Activated naive CD4-positive, alpha-beta T cell treated with anti-CD3 and anti-CD28 coated beads, Interleukin-2, amount 10 ng/mL, durations not matched to agents 7 days and 5 days (primary cell): ENCODE measurements at regions of chr5 and their contacts with region 1.

Region 1: GRCh38 chr5:55159763-55160492 is at the start of gene GPX8:
- DNase-seq: peak; percentile 33
- H3K4me3 Mint-ChIP-seq: no peak within 1 kb of the TSS
- H3K27ac Mint-ChIP-seq: no peak within 1 kb of the TSS
- H3K4me1 Mint-ChIP-seq: peaks cover 3% of the 10 kb centered on the region
- H3K27me3 Mint-ChIP-seq: peaks cover 46% of the 10 kb centered on the region

Region 2: GRCh38 chr5:54867310-54867944 is 292.5 kb before region 1 on chr5:
- CTCF ChIA-PET with region 1: interaction called, 22 read pairs
- DNase-seq: no peak
- H3K4me3 Mint-ChIP-seq: no peak overlapping the region
- H3K27ac Mint-ChIP-seq: no peak overlapping the region
- H3K4me1 Mint-ChIP-seq: peaks cover 20% of the 10 kb centered on the region
- H3K27me3 Mint-ChIP-seq: peaks cover 42% of the 10 kb centered on the region

Region 3: DNA sequence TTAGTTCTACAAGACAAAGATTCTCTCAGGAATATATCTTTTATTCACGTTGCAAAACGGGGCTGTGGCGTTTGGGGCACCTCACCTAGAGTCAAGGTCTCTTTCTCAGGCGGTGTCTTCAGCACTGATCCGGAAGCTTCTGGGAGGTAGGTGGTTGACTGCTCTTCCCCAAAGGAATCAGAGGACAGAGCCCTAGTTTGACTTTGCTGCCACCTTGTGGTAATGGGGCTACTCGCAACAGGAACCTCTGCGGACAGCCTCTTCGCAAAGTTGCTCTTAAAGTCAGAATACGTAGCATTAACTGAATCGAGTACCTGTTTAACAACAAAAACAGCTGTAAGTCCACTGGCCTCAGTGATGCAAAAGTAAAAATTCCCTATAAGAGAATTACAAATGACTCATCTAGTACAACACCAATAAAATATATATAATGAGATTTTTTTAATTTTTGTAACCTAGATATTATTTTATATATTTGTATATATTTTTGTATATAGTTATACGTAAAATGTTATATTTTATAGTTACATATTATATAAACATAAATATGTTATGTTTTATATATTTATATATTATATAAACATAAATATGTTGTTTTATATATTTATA is 13.3 kb before region 1 on chr5:
- CTCF ChIA-PET with region 1: interaction called, 13 read pairs
- DNase-seq: peak; percentile 91
- H3K4me3 Mint-ChIP-seq: no peak overlapping the region
- H3K27ac Mint-ChIP-seq: no peak overlapping the region
- H3K4me1 Mint-ChIP-seq: peaks cover 35% of the 10 kb centered on the region
- H3K27me3 Mint-ChIP-seq: peaks cover 50% of the 10 kb centered on the region

Region 4: DNA sequence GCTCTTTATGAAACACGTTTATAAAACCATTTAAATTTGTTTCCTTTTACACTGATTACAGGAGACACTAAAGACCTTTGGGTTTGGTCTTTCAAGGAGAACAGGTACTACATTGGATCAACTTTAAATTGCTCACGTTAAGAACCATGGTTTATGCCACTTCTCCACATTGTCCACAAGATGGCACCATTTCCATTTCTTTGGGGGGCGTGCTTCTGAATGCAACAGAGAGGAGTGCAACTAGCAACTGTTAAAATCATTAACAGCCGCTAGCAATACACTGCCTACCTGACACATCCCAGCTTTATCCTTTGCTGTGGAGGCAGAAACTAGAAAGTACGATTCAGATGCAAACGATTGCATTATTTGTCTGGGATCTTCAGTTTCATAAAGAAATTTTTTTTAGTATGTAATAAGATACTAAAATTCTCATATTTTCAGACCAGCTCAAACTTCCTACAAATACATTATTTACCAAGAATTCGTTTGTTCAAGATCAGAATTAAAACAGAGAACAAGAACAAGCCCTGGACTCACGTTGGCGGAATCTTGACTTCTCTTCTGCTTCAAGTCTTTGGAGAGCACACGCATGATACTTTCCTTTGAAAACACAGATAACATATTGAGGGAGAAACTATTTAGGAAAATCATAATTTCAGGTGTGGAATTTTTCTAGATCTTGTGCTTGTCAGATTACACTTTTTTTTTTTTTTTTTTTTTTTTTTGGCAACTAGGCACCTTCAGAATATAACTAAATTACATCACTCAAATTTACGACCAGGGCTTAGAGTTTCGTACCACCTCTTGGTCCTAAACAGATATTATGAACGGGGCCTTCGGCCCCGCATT is 12.3 kb after region 1 on chr5:
- CTCF ChIA-PET with region 1: interaction called, 14 read pairs
- DNase-seq: peak; percentile 74
- H3K4me3 Mint-ChIP-seq: peak overlapping the region; percentile 77
- H3K27ac Mint-ChIP-seq: no peak overlapping the region
- H3K4me1 Mint-ChIP-seq: peaks cover 43% of the 10 kb centered on the region
- H3K27me3 Mint-ChIP-seq: peaks cover 78% of the 10 kb centered on the region